Dendritic cell treated with granulocyte-macrophage colony-stimulating factor and Interleukin-4, amounts not matched to agents 40 ng/mL and 50 ng/mL, for 4 days (primary cell): ENCODE measurements at regions of chr21 and their contacts with region 1.

Region 1: DNA sequence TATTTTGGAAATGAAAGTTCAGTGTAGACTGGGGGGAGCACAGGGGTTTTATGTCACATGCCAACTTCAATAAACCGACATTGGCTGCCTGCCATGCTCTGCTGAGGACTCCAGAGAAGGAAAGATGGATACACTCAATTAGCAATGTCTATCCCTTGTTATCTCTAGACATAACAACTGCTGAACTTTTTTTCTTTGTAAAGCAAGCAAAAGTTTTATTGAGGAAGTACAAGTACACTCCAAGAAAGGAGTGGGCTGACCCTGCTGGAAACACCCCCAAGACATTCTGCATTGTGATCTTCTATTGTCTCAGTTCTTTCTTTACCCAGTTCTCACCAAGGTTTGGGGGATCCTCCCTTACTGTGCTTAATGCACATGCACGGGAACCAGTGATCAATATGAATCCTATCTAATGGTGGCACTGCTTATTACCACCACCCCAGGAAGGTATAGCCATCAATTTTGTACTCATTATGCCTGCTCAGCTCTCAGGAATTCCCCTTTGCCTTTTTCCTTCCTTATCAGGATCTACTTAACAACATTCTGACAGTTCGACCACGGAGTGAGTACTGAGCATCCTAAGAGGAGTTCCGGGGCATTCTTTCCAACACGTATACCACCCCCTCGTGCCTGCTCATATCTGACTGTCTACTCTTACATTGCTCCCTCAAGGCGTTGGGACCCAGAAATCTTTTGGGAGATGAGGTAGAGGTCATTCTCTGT is 28.7 kb downstream of the SYNJ1 start:
- H3K4me3 Mint-ChIP-seq: no peak overlapping the region
- H3K27ac Mint-ChIP-seq: peak overlapping the region; percentile 46
- H3K4me1 Mint-ChIP-seq: peaks cover 18% of the 10 kb centered on the region
- H3K27me3 Mint-ChIP-seq: no peaks in the 10 kb centered on the region

Region 2: DNA sequence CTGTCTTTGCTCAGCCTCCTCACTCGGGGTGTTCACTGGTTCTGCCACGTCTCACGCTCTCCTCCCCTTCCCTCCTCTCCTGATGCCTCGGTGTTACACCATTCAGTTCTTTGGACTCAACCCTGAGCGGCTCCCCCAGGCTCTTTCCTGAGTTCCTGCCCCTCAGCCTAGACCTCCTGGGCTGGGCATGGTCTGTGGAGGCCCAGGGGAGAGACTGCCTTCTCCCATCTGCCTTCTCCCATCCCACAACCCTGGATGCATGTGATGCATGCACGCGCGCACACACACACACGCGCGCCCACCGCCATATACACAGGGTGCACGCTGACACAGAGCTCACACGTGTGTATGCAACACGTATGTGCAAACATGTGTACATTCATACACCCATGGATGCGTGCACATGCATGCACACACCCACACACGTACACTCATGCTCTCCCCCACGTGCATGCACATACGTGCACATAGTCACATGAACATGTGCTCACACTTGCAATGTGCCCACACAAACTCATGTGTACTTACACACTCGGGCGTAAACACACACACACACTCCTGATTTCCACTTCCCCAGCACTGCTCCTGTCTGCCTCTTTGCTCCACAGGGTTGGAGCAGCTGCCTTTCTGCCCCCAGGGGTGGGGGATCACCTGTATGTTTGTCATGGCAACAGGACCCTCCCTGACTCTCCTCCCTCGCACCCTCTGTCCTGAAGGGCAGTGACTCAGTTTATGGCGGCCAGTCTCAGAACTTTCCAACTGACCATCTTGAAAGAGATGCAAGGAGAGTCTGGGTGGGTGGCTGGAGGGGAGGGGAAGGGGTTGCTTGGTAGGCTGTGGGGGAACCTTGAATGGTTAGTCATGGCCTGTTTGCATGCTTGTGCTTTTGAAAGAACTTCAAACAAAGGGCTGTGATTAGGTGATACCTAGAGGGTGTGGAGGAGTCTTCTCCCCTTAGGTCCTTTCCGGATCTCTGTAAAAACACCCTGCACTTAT is 767.2 kb before region 1 on chr21:
- intact Hi-C with region 1: no loop called
- H3K4me3 Mint-ChIP-seq: no peak overlapping the region
- H3K27ac Mint-ChIP-seq: no peak overlapping the region
- H3K4me1 Mint-ChIP-seq: no peaks in the 10 kb centered on the region
- H3K27me3 Mint-ChIP-seq: no peaks in the 10 kb centered on the region

Region 3: DNA sequence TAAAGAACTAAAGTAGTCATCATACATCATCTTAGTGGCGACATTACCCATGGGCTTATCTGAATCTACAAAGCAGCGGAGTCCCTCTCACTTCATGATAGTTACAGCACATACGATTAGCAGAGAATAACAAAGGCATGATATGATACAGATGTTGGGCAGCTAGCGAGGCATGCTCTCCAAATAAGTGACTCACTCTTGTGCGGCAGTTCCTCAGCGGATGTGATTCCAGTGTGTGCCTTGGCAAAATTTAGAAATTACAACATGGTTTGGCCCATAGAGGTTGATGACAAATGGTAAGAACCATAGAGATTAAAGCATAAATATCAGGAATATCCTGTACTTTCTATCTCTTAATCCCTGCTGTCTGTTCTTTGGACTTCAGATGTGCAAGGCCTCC is 120.6 kb after region 1 on chr21:
- intact Hi-C with region 1: loop called (anchors 10 kb)
- H3K4me3 Mint-ChIP-seq: no peak overlapping the region
- H3K27ac Mint-ChIP-seq: no peak overlapping the region
- H3K4me1 Mint-ChIP-seq: no peaks in the 10 kb centered on the region
- H3K27me3 Mint-ChIP-seq: no peaks in the 10 kb centered on the region